ENCODE measurements at regions of chr9 and their contacts with region 1.

Region 1: GRCh38 chr9:87140605-87141109 is 193.4 kb upstream of the GAS1 start:
- DNase-seq: no peak

Region 2: GRCh38 chr9:87016681-87017080 is 124.0 kb before region 1 on chr9:
- intact Hi-C with region 1: loop called in 1 of 2 experiments (anchors 5 kb)
- DNase-seq: no peak

Measured in posterior vena cava (tissue), 2 donors.